SK-MEL-5 (cell line): ENCODE measurements at regions of chr20 and their contacts with region 1.

Region 1: DNA sequence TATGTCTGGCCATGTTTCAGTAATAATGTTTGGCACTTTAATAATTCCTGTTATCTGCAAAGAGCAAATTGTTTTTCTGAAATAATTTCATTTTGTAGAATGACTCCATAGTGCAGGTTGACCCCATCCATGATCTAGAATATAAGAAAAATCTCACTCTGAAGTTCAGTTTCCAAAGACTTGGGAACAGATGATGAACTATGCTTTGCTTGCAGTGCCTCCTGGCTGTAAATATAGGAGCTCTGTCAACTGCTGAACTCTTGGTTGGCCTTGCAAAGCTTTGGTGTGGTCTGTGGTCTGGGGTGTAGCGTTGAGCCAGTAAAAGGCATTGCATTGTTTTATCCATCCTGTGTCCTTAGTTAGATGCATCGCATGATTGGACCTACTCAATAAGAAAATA is 104.0 kb downstream of the PLCB4 start:
- DNase-seq: peak; percentile 96

Region 2: DNA sequence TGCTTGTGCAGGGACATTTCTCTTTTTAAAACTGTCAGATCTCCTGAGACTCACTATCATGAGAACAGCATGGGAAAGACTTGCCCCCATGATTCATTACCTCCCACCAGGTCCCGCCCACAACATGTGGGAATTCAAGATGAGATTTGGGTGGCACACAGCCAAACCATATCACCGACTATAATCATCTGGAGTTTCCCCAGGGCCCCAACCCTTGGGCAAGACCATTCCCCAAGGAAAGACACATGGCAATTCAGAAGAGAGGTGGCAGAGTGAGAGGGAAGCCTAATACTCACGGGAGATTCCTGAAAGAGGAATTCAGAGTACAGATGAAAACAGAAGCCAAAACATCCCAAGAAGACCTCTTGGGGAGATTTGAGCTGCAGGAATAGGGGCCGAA is 394.9 kb before region 1 on chr20:
- in situ Hi-C with region 1: loop called (anchors 10 kb)
- DNase-seq: no peak

Region 3: DNA sequence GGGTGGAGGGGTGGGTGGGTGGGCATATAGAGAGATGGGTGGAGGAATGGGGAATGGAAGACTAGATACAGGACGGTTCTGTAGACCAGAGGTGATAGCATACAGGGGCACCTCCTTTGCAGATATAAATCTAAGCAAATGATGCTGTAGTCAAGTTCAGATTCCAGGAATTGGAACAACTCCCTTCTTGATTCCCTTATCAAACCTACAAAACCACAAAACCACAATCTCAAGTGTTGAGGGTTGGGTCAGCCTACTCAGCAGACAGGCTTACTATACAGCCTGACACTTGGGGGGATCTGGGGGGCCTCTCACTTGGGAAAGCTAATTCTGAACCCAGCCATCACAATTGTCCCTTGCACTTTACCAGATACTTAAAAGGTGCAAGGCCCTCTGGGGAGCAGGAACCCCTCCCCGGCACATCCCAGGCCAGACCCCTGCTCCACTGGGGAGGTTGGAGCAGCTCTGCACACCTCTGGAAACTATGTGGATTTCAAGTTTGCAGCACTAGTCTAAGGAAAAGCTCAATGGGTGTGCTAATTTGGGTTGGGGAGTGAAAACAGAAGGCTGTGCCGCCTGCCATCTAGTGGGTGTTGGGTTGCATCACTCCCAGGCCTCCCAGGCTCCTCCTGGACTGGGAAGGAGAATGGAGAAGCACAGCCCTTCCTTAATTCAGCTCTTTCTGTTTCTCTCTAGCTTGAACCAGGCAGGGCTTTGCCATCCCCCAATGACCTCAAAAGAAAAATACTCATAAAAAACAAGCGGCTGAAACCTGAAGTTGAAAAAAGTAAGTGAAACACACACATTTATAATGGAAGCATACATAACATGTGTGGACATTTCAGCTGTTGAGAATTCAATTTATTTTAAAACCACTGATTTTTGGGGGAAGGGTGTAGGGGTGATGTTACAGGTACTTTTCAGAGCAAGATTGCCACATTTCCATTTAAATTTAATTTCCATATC is 220.3 kb after region 1 on chr20:
- in situ Hi-C with region 1: loop called (anchors 10 kb)
- DNase-seq: peak; percentile 83